Mammary epithelial cell (primary cell): ENCODE measurements at regions of chr6 and their contacts with region 1.

Region 1: DNA sequence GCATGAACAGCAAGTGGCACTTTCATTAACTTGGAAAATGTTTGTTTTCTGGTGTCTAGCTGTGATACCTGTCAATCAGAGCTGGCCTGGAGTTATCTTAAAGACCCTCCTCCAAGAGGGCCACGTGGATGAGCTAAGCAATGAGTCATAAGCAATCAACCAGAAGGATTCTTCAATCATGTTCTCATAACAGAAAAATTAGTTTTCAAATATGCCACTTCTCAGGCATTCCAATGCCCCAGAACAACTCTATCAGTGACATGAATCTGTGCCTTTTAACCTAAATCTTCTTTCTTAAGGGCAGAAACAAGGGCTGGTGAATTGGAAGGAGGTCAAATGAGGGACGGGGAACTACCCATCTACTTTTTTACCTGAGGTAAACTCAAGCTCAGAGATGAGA is 282.9 kb downstream of the HTR1B start:
- DNase-seq: no peak
- H3K4me3 ChIP-seq: no peak overlapping the region
- H3K27ac ChIP-seq: no peak overlapping the region
- H3K4me1 ChIP-seq: no peaks in the 10 kb centered on the region
- H3K27me3 ChIP-seq: no peaks in the 10 kb centered on the region
- CTCF ChIP-seq: no peak

Region 2: DNA sequence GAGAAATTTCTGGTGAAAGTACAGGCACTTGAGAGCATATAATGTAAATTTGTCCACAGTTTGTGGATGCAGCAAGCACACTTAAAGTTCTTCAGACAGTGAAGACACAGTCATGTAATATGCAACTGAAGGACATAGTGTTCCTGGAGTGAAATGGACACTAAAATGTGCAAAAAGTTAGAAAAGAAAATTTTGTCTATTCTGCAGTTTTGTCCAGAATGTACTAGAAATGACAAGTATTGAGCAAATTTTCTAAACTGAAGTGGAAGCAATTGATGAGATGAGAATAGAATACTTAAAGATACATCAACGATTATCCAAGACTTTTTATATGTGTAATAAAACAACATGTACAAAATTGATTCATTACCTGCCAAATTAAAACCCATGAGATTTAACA is 460.9 kb before region 1 on chr6:
- CTCF ChIA-PET with region 1: no interaction called
- dilution Hi-C with region 1: no loop called
- in situ Hi-C with region 1: no loop called
- intact Hi-C with region 1: loop called (anchors 5 kb)
- DNase-seq: no peak
- H3K4me3 ChIP-seq: no peak overlapping the region
- H3K27ac ChIP-seq: no peak overlapping the region
- H3K4me1 ChIP-seq: no peaks in the 10 kb centered on the region
- H3K27me3 ChIP-seq: peaks cover 2% of the 10 kb centered on the region
- CTCF ChIP-seq: no peak